ENCODE measurements at regions of chr9 and their contacts with region 1.

Region 1: DNA sequence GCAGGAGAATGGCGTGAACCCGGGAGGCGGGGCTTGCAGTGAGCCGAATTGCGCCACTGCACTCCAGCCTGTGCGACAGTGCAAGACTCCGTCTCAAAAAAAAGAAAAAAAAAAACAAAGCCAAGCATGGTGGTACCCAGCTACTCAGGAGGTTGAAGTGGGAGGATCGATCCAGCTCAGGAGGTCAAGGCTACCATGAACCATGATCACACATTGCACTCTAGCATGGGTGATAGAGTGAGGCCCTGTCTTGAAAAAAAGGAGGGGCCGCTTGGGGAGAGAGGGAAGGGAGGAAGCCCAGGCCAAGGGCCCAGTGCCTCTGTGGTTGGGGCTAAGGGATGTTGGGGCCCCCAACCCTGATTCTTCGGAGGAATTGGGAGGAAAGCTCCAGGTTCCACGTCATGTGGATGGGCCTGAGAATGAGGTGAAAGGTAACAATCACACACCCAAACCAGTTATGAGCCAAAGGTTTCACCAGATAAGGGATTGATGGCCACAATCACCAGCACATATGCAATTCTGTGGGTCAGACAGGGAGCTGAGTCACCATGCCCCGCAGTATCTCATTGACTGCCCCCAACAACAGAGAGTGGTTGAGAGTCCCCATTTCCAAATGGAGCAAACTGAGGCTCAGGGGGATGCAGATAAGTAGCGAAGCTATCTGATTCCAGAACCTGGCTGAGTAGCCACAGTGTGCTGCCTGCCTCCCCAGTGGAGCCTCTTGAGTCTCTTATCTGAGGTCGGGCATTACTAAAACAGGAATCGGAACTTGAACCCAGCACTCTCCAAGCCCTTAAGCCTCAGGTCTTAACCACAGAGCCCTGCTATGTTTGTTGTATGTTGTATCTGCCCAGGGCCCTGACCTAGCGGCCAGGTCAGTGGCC is 20.5 kb downstream of the SWI5 start:
- DNase-seq: no peak
- H3K4me3 Mint-ChIP-seq: no peak overlapping the region
- H3K27ac Mint-ChIP-seq: no peak overlapping the region
- H3K4me1 Mint-ChIP-seq: no peaks in the 10 kb centered on the region
- H3K27me3 Mint-ChIP-seq: no peaks in the 10 kb centered on the region

Region 2: DNA sequence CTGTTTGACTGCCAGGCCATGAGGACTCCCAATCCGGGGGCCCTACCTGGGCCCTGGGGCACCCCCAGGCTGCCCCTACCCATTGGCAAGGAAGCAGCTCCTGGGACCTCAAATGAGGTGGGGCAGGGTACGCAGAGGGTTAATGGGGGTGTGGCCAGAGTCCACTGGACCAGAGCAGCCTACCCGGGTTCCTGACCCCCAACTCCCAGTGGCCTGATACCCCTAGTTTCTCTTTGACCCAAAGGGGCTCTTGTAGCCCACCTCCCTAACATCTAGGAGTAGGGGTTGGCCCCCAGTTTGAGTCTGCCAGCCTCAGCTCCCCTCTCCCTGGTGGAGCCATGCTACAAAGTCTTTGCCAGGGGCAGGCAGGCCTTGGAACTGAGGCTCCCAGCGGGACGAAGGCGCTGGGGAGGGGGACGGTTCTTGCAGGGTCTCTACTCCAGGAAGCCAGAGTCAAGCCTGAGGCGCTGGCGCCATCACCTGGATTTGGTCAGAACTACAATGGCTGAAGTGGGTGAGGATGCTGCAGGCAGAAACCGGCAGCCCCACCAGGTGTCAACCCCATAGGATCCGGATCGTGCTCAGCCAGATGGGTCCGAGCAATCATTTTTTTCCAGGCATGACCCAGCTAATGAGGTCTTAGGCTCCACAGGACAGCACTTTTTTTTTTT is 115.7 kb after region 1 on chr9:
- CTCF ChIA-PET with region 1: interaction called, 3 read pairs
- intact Hi-C with region 1: loop called (anchors 1 kb)
- DNase-seq: peak; percentile 78
- H3K4me3 Mint-ChIP-seq: no peak overlapping the region
- H3K27ac Mint-ChIP-seq: no peak overlapping the region
- H3K4me1 Mint-ChIP-seq: no peaks in the 10 kb centered on the region
- H3K27me3 Mint-ChIP-seq: peaks cover 51% of the 10 kb centered on the region

Region 3: DNA sequence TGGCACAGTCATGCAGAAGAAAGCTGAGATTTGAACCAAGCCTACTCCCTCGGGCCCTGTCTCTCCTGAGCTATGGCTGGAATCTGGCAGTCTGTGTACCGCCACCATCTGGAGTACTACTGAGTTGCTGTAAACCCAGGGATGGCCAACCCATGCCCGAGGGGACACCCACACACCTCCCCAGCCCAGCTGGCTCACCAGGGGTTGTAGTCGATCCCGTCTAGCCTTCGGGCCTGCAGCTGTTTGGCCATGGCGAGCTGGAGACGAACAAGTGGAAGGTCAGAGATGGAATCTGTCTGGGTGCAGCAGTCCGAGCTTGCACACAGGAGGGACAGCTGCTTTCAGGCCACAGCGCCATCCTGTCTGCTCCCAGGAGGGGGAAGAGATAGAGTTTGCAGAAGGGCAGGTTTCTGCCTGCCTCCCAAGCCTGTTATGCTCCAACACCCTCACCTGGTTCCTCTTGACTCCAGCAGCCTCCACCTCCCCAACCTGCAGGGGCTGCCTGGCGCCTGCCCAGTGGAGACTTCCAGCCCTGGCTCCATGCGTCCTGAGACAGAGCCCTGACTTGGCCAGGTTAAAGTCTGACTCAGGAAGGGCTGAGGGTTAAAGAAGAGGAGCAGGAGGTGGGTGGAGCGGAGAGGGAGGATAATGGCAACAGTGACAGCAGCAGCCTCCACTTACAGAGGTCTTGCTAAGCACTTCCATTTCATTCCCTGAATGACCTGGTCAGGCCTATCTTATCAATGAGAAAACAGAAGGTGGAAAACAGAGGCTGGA is 548.8 kb after region 1 on chr9:
- CTCF ChIA-PET with region 1: no interaction called
- intact Hi-C with region 1: no loop called
- DNase-seq: no peak
- H3K4me3 Mint-ChIP-seq: no peak overlapping the region
- H3K27ac Mint-ChIP-seq: no peak overlapping the region
- H3K4me1 Mint-ChIP-seq: no peaks in the 10 kb centered on the region
- H3K27me3 Mint-ChIP-seq: no peaks in the 10 kb centered on the region